Activated naive CD4-positive, alpha-beta T cell treated with anti-CD3 and anti-CD28 coated beads for 36 hours (primary cell): ENCODE measurements at regions of chr2 and their contacts with region 1.

Region 1: GRCh38 chr2:142980561-142981378 is 103.3 kb downstream of the KYNU start:
- DNase-seq: no peak
- H3K4me3 Mint-ChIP-seq: no peak overlapping the region
- H3K27ac Mint-ChIP-seq: no peak overlapping the region
- H3K4me1 Mint-ChIP-seq: no peaks in the 10 kb centered on the region
- H3K27me3 Mint-ChIP-seq: peaks cover 2% of the 10 kb centered on the region

Region 2: DNA sequence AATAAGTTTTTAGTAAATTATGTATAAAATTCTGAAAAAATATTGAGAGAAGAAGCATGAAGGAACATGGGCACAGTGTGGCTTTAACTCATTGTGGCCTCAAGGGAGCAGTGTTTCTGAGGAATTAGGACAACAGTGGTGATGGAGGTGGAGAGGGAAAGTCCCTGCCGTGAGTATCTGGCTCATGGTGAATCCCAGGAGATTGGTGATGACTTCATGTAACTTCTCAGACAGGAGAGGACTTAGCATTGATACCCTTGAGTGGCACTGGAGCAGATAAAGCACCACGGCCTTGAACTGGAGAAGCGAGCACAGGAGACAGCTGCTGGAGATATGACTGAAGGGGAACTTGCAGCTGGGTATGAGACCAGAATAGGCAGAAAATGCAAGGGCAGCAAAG is 815.0 kb before region 1 on chr2:
- CTCF ChIA-PET with region 1: no interaction called
- intact Hi-C with region 1: loop called (anchors 5 kb)
- DNase-seq: no peak
- H3K4me3 Mint-ChIP-seq: no peak overlapping the region
- H3K27ac Mint-ChIP-seq: no peak overlapping the region
- H3K4me1 Mint-ChIP-seq: no peaks in the 10 kb centered on the region
- H3K27me3 Mint-ChIP-seq: no peaks in the 10 kb centered on the region

Region 3: GRCh38 chr2:142682528-142682927 is 298.2 kb before region 1 on chr2:
- CTCF ChIA-PET with region 1: no interaction called
- intact Hi-C with region 1: loop called (anchors 5 kb)
- DNase-seq: no peak
- H3K4me3 Mint-ChIP-seq: no peak overlapping the region
- H3K27ac Mint-ChIP-seq: no peak overlapping the region
- H3K4me1 Mint-ChIP-seq: no peaks in the 10 kb centered on the region
- H3K27me3 Mint-ChIP-seq: no peaks in the 10 kb centered on the region

Region 4: DNA sequence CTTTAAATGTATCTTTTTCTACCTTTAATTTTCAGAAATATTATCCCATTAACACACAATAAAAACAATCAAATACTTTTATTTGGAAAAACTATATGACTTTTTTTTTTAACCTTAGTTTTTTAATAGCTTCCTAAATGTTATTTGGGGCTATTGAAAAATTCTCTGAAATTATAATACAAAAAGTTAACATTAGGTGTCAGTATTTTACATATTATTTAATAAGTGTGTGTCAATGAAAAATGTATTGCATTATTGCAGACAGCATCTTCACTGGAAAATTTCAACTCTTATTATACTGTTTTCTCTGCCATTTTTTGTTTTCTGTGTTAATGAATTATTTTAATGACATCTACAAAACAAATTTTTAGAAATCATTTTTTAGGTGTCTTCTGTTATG is 97.3 kb after region 1 on chr2:
- CTCF ChIA-PET with region 1: no interaction called
- intact Hi-C with region 1: no loop called
- DNase-seq: no peak
- H3K4me3 Mint-ChIP-seq: no peak overlapping the region
- H3K27ac Mint-ChIP-seq: no peak overlapping the region
- H3K4me1 Mint-ChIP-seq: peaks cover under 1% of the 10 kb centered on the region
- H3K27me3 Mint-ChIP-seq: no peaks in the 10 kb centered on the region